Activated T-helper 2 cell treated with anti-CD3 and anti-CD28 coated beads, Interferon-gamma antibody, Interleukin-2, Interleukin-4, amounts not matched to agents 10 μg/mL and 5 μg/mL and 100 μg/mL, durations not matched to agents 14 hours and 24 hours and 36 hours (primary cell): ENCODE measurements at regions of chr12 and their contacts with region 1.

Region 1: GRCh38 chr12:78580296-78580695 is 284.3 kb upstream of the SYT1 start:
- DNase-seq: no peak
- H3K4me3 Mint-ChIP-seq: no peak overlapping the region
- H3K27ac Mint-ChIP-seq: no peak overlapping the region
- H3K4me1 Mint-ChIP-seq: no peaks in the 10 kb centered on the region
- H3K27me3 Mint-ChIP-seq: no peaks in the 10 kb centered on the region

Region 2: GRCh38 chr12:78530100-78530765 is 50.1 kb before region 1 on chr12:
- intact Hi-C with region 1: no loop called
- DNase-seq: no peak
- H3K4me3 Mint-ChIP-seq: no peak overlapping the region
- H3K27ac Mint-ChIP-seq: no peak overlapping the region
- H3K4me1 Mint-ChIP-seq: no peaks in the 10 kb centered on the region
- H3K27me3 Mint-ChIP-seq: no peaks in the 10 kb centered on the region

Region 3: DNA sequence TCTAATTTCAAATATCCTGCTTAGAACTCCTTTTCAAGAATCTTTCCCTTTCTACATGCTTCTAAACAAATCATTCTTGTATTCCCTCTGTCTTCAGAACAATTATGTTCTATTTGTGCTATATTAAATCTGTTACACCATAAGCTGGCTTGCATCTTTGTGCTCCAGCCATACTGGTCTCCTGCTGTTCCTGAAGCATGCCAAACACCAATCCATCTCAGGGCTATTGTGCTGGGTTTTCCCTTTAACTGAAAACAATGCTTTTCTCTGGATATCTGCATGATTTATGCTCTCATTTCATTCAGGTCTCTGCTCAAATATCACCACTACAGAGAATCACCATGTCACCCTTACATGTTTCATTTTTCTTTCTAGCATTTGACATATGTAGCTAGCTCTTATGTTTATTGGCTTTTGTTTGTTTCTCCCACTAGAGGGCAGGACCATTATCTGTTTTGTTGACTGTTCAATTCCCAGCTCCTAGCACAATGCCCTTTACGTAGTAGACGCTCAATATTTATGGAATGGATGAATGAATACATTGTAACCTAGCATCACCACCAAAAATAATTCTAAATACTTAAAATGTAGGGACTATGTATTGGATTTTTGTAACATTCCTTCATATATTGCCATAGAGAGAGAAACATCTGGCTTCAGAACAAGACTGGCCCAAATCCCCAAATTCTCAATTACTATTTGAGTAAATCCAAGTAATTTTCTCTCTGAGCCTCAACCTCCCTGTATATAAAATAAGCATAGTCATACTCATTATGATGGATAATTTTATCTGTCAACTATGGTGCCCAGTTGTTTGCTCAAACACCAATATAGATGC is 17.7 kb before region 1 on chr12:
- intact Hi-C with region 1: no loop called
- DNase-seq: no peak
- H3K4me3 Mint-ChIP-seq: no peak overlapping the region
- H3K27ac Mint-ChIP-seq: no peak overlapping the region
- H3K4me1 Mint-ChIP-seq: no peaks in the 10 kb centered on the region
- H3K27me3 Mint-ChIP-seq: no peaks in the 10 kb centered on the region

Region 4: DNA sequence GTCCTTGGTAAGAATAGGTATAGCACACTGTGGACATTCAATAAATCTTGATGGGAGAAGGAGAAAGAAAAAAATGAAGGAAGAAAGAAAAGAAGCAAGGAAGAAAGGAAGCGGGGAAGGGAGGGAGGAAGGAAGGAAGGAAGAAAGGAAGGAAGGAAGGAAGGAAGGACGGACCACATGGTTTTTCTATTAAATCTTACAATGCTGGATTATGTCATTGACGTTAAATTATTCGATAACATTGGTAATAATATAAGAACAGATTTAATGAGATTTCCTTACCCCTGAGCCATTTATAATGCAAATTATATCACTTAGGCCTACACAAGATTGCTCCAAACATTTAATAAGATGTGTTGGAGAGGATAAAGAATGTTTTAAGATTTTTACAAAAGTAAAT is 159.4 kb after region 1 on chr12:
- intact Hi-C with region 1: loop called (anchors 2 kb)
- DNase-seq: no peak
- H3K4me3 Mint-ChIP-seq: no peak overlapping the region
- H3K27ac Mint-ChIP-seq: no peak overlapping the region
- H3K4me1 Mint-ChIP-seq: no peaks in the 10 kb centered on the region
- H3K27me3 Mint-ChIP-seq: no peaks in the 10 kb centered on the region

Region 5: GRCh38 chr12:78928200-78929074 is 348.1 kb after region 1 on chr12:
- intact Hi-C with region 1: no loop called
- DNase-seq: no peak
- H3K4me3 Mint-ChIP-seq: no peak overlapping the region
- H3K27ac Mint-ChIP-seq: no peak overlapping the region
- H3K4me1 Mint-ChIP-seq: no peaks in the 10 kb centered on the region
- H3K27me3 Mint-ChIP-seq: no peaks in the 10 kb centered on the region